Heart right ventricle (tissue), 16 donors: ENCODE measurements at regions of chr16 and their contacts with region 1.

Region 1: DNA sequence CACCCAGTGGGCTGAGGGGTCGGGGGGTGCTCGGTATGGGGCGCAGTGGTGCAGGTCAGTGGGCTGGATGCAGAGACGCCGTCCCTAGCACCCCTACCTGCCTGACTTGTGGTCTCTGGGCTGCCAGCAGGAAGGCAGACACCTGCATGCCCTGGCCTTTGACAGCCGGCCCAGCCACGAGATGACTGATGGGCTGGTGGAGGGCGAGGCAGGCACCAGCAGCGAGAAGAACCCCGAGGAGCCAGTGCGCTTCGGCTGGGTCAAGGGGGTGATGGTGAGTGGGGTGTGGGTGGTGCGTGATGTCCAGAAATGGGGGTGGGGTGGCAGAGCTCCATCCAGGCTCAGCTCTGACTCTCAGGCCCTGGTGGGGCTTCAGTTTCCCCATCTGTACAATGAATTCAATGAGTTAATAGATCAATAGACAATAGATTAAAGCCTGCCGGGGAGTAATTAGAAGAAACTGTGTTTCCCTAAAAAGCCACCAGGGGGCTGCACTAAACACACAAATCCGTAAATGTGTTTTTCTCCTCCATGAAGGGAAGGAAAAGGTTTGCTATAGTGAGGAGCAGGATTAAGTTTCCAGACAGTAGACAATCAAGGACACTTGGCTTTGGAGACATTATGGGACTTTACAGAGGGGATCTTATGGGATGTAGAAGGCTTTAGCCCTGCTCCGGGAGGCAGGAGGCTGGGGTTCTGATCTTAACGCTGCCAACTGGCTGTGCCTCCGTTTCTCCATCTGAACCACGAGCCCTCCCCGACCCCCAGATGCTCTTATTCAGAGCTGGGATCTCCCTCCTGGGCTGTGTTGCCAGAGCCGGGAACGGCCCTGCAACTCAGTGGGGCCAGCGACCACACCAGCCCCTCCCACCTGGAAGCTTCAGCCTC is 2.2 kb downstream of the SLC12A3 start:
- DNase-seq: peak in 1 of 2 donors; percentile 40
- ATAC-seq: peak in 6 of 8 donors; percentile 15 to 53 (median 36)
- H3K4me3 ChIP-seq: no peak overlapping the region
- H3K27ac ChIP-seq: no peak overlapping the region
- H3K4me1 ChIP-seq: peaks cover 0 to 19% (median 6%) of the 10 kb centered on the region in 9 donors
- H3K27me3 ChIP-seq: no peaks in the 10 kb centered on the region
- CTCF ChIP-seq: peak; percentile 71 to 86 (median 81)

Region 2: DNA sequence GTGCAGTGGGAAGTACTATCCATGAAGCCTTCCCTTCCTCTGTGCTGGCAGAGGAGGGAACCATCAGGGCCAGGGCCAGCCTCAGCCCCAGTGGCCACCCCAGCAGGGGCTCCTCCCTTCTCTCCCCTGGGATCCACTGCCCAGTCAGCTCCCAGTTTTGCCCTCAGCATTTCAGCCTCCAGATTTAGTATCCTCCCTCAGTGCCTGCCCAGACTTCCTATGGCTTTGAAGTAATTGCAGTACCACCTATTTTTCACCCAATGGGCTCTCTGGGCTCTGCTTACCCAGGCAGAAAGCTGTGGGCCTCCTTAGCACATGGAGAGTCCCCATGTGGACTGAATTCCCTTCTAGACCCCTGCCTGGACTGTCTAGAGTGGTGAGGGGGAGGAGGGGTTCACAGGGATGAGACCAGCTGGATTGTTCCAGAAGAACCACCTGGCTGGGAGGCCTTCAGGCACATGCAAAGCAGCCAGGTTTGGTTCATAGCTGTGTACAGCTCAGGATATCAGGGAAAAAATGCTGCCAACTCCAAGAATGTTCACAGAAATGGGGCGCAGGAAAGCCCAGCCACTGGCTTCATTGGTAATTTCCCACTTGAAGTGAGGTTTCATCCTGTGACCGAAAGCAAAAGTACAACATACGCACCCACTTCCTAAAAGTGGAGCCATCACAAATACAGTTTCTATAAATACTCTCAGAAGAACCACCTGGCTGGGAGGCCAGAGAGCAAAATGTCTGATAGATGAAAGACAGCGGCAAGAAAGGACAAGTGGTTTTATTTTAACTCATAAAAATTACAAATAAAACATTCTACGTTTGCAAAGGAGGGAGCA is 49.6 kb after region 1 on chr16:
- intact Hi-C with region 1: loop called in 1 of 10 experiments (anchors 5 kb)
- DNase-seq: no peak
- ATAC-seq: peak in 5 of 8 donors; percentile 19 to 63 (median 53)
- H3K4me3 ChIP-seq: no peak overlapping the region
- H3K27ac ChIP-seq: peak overlapping the region in 8 of 10 donors; percentile 38 to 84 (median 63)
- H3K4me1 ChIP-seq: peaks cover 5 to 60% (median 40%) of the 10 kb centered on the region in 9 donors
- H3K27me3 ChIP-seq: no peaks in the 10 kb centered on the region
- CTCF ChIP-seq: no peak

Region 3: DNA sequence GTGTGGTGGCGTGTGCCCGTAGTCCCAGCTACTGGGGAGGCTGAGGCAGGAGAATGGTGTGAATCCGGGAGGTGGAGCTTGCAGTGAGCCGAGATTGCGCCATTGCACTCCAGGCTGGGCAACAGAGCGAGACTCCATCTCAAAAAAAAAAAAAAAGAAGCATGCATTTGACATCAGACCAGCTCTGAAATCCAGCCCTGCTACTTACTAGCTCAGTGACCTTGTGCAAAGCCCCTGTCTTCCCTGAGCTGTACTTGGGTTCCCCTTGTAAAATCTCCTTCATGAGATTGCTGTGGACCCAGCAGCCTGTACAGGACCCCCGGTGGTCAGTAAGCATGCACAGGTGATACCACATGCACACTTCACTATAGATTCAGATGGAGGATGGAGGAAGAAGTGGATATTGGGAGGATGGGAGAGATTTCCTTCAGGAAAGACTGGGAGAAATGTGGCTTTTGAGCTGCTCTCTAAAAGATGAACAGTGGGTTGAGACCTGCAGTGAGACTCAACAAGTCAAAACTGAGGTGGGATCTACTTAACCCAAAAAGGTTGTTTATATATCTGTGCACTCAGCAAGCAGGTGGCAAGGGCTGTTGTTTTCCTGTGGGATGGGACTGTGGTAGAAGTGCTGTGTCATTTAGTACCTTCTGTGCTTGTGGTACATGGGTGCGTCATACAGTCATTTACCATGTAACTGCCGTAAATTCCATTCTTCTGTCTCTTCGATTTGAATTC is 71.4 kb after region 1 on chr16:
- intact Hi-C with region 1: loop called in 3 of 10 experiments (anchors 5 kb)
- DNase-seq: no peak
- ATAC-seq: no peak
- H3K4me3 ChIP-seq: no peak overlapping the region
- H3K27ac ChIP-seq: no peak overlapping the region
- H3K4me1 ChIP-seq: peaks cover 5 to 67% (median 50%) of the 10 kb centered on the region in 9 donors
- H3K27me3 ChIP-seq: no peaks in the 10 kb centered on the region
- CTCF ChIP-seq: no peak

Region 4: DNA sequence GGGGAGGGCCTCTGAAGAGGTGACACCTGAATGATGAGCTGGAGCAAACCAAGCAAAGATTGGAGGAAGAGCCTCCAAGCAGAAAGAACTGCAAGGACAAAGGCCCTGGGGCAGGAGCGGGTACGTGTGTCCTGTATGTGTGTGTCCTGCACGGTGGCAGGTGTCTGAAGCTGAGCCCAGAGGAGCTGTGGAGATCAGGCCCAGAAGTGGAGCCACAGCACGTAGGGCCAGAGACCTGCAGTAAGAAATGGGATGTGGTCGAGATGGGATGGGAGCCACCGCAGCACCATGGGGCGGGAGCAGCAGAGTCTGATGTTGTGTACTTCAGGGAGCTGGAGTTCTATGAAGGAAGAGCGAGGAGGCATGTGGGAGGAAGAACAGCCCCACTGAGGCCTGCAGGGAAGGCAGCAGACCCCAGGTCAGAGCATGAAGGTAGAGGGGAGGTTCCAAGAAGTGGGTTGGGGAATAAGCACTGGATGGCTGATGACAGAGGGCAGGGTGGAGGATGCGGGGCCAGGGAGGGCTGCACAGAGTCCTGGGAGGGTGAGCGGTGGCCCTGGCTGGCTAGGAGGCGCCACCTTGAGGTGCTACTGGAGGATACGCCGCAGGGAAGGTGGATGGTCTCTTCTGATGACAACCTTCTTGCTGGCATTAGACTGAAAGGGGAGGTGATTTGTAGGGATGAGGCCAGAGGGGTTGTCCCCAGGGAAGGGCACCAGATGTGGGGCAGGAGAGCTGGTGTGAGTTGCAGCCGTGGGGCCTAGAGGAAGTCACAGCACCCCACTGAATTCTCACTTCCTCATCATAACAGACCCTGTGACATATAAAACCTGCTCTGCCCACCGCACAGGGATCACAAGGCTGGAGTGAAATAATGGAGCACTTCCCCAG is 83.9 kb after region 1 on chr16:
- intact Hi-C with region 1: loop called (anchors 1 to 5 kb)
- DNase-seq: peak; percentile 26 to 44
- ATAC-seq: peak; percentile 59 to 76 (median 69)
- H3K4me3 ChIP-seq: no peak overlapping the region
- H3K27ac ChIP-seq: peak overlapping the region in 1 of 10 donors; percentile 7
- H3K4me1 ChIP-seq: peaks cover 0 to 7% (median 0%) of the 10 kb centered on the region in 9 donors
- H3K27me3 ChIP-seq: no peaks in the 10 kb centered on the region
- CTCF ChIP-seq: peak; percentile 22 to 70 (median 63)

Region 5: DNA sequence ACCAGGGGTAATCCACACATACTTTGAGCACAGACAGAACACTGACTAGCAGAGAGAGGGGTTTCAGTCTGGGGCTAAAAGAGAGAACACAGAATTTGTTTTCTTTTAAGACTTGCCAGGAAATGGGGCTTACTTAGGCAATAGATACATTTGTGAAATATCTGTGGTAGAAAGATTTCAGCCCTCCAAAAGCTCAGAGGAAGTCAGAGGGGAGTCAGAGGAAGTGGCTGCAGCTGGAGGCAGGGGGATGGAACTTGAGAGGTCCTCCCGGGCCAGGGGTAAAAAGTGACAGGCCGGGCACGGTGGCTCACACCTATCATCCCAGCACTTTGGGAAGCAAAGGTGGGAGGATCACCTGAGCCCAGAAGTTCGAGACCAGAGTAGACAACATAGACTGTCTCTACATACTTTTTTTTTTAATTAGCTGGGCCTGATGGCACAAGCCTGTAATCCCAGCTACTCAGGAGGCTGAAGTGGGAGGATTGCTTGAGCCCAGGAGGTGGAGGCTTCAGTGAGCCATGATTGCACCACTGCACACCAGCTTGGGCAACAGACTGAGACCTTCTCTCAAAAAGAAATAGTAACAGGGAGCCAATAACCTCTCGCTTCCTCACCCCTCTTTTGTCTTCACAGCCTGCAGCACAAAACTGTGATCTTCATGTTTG is 172.1 kb after region 1 on chr16:
- intact Hi-C with region 1: loop called in 7 of 10 experiments (anchors 1 to 10 kb)
- DNase-seq: no peak
- ATAC-seq: peak in 2 of 8 donors; percentile 18 to 30
- H3K4me3 ChIP-seq: peak overlapping the region in 1 of 10 donors; percentile 23
- H3K27ac ChIP-seq: peak overlapping the region in 3 of 10 donors; percentile 1 to 86 (median 29)
- H3K4me1 ChIP-seq: peaks cover 0 to 72% (median 14%) of the 10 kb centered on the region in 9 donors
- H3K27me3 ChIP-seq: no peaks in the 10 kb centered on the region
- CTCF ChIP-seq: no peak

Region 6: GRCh38 chr16:57147381-57148221 is 280.4 kb after region 1 on chr16:
- intact Hi-C with region 1: loop called in 1 of 10 experiments (anchors 10 kb)
- DNase-seq: peak in 1 of 2 donors; percentile 61
- ATAC-seq: peak in 7 of 8 donors; percentile 19 to 69 (median 64)
- H3K4me3 ChIP-seq: peak overlapping the region in 2 of 10 donors; percentile 7 to 19
- H3K27ac ChIP-seq: peak overlapping the region in 9 of 10 donors; percentile 66 to 85 (median 78)
- H3K4me1 ChIP-seq: peaks cover 14 to 94% (median 68%) of the 10 kb centered on the region in 9 donors
- H3K27me3 ChIP-seq: no peaks in the 10 kb centered on the region
- CTCF ChIP-seq: no peak